Panc1 (cell line): ENCODE measurements at regions of chrX and their contacts with region 1.

Region 1: GRCh38 chrX:110383414-110383813 is 24.8 kb downstream of the RTL9 start:
- DNase-seq: no peak
- ATAC-seq: no peak
- H3K4me3 ChIP-seq: no peak overlapping the region
- H3K27ac ChIP-seq: no peak overlapping the region
- H3K4me1 ChIP-seq: no peaks in the 10 kb centered on the region
- H3K27me3 ChIP-seq: no peaks in the 10 kb centered on the region
- CTCF ChIP-seq: no peak

Region 2: GRCh38 chrX:110588164-110588563 is 204.8 kb after region 1 on chrX:
- CTCF ChIA-PET with region 1: no interaction called
- POLR2A ChIA-PET with region 1: no interaction called
- in situ Hi-C with region 1: no loop called
- intact Hi-C with region 1: no loop called
- DNase-seq: no peak
- ATAC-seq: no peak
- H3K4me3 ChIP-seq: no peak overlapping the region
- H3K27ac ChIP-seq: no peak overlapping the region
- H3K4me1 ChIP-seq: no peaks in the 10 kb centered on the region
- H3K27me3 ChIP-seq: no peaks in the 10 kb centered on the region
- CTCF ChIP-seq: no peak

Region 3: DNA sequence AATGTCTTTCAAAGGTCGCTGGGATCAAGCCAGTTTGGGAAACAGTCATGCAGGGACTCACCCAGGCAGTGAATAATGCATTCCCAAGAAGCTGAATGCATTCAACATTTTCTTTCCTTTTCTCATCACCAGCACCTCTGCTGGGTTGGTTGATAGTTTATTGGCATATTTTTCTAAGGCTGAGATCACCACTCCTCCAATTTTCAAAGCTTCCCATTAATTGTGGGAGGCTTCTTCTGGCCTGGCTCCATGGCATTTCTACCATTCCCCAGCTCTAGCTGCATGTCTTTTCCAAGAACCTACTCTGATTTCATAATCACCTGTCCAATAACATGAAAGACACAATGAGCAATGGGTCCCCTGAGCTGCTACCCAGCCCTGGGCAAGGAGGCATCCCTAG is 376.4 kb after region 1 on chrX:
- CTCF ChIA-PET with region 1: no interaction called
- POLR2A ChIA-PET with region 1: no interaction called
- in situ Hi-C with region 1: no loop called
- intact Hi-C with region 1: no loop called
- DNase-seq: no peak
- ATAC-seq: no peak
- H3K4me3 ChIP-seq: no peak overlapping the region
- H3K27ac ChIP-seq: no peak overlapping the region
- H3K4me1 ChIP-seq: no peaks in the 10 kb centered on the region
- H3K27me3 ChIP-seq: no peaks in the 10 kb centered on the region
- CTCF ChIP-seq: no peak

Region 4: DNA sequence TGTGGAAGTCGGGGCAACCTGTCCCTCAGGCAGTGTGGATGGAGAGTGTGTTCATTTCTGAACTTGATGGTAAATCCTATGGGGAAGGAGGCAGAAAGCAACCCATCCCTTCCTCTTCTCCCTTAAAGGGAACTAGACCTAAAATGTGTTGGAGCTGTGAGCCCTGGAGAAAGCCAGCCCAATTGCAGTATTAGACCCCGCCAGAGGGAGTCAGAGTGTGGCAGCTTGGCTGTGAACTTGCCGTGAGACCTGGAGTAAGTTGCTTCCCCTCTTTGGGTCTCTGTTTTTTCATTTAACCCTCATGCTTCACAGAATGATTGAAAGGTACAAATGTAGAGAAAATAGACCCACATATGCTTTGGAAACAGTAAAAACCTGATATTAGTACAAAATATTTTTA is 603.9 kb after region 1 on chrX:
- CTCF ChIA-PET with region 1: no interaction called
- POLR2A ChIA-PET with region 1: no interaction called
- in situ Hi-C with region 1: no loop called
- intact Hi-C with region 1: no loop called
- DNase-seq: no peak
- ATAC-seq: no peak
- H3K4me3 ChIP-seq: no peak overlapping the region
- H3K27ac ChIP-seq: no peak overlapping the region
- H3K4me1 ChIP-seq: no peaks in the 10 kb centered on the region
- H3K27me3 ChIP-seq: no peaks in the 10 kb centered on the region
- CTCF ChIP-seq: peak; percentile 14; the same call in 1 of the 2 replicates

Region 5: GRCh38 chrX:111521169-111521568 is 1137.8 kb after region 1 on chrX:
- CTCF ChIA-PET with region 1: no interaction called
- POLR2A ChIA-PET with region 1: interaction called, 10 read pairs
- in situ Hi-C with region 1: no loop called
- intact Hi-C with region 1: no loop called
- DNase-seq: no peak
- ATAC-seq: no peak
- H3K4me3 ChIP-seq: no peak overlapping the region
- H3K27ac ChIP-seq: no peak overlapping the region
- H3K4me1 ChIP-seq: no peaks in the 10 kb centered on the region
- H3K27me3 ChIP-seq: no peaks in the 10 kb centered on the region
- CTCF ChIP-seq: no peak